ENCODE measurements at regions of chr11 and their contacts with region 1.

Region 1: DNA sequence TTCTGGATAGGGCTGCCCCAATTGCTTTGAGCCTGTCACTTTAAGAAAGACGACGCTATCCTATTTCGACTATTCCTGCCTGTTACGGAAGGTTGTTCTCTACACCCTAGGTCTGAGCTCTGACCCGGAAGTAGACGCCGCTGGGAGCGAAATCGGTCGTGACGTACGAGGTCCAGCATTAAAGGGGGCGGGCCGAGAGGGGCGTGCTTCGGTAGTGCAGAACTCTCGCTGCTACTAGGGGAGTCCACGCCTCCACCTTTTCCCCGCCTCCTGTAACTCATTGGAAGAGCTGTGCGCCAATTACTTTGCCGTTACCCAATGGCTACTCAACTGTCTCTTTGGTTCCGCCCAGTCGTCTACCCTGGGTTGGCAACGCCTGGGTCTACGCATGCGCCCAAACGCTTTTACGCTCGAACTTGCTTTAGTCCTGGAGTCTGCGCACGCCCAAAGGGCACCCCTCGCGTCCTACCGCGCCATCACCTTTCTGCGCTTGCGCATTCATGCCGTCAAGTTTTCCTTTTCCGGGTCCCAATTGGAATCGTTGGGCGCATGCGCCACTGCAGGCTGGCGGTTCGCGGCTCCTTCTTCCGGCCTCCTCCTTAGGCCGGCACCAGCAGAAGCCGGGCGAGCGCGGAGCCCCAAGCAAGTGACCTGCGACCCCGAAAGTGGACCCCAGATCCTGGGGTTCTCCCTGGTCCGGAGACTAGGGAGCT is at the start of gene PCNX3:
- DNase-seq: peak; percentile 100
- H3K4me3 ChIP-seq: peak within 1 kb of the TSS; percentile 93
- H3K27ac ChIP-seq: peak within 1 kb of the TSS; percentile 64
- H3K4me1 ChIP-seq: peaks cover 27% of the 10 kb centered on the region; the same call in 1 of the 2 replicates
- H3K27me3 ChIP-seq: no peaks in the 10 kb centered on the region
- CTCF ChIP-seq: no peak
- total RNA-seq, gene PCNX3: 76.9 and 85.9 TPM in 2 replicates

Region 2: DNA sequence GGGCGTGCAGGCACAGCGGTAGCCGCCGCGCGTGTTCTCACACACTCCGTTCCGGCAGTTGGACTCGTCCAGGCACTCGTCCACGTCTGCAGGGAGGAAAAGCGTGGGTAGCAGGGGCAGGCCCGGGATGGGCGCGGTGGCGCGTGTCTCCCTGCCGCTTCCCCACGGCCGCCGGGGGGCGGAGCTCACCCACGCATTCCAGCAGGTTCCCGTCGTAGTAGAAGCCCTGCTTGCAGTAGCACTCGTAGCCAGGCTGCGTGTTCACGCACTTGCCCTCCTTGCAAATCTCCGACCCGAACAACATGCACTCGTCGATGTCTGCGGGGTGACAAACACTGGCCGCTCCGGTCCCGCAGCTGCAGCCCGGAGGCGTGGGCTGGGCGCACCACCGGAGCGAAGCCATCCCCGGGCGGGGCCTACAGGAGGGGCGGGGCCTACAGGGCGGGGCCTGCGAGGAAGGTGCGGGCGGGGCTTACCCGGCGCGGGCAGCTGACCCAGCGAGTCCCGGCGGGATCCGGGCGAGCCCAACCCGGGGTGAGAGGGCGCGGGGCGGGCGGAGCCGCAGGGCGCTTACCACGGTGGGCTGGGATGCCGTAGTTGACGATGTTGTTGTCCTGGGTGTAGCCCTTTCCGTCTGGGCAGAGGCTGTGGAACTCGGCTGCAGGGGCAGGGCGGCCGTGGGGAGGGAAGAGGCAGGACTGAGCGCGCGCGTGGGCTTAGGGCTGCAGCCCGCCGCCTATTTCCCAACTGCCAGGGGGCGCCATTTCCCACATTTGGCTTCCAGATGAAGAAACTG is 74.9 kb before region 1 on chr11:
- CTCF ChIA-PET with region 1: no interaction called
- POLR2A ChIA-PET with region 1: no interaction called
- intact Hi-C with region 1: loop called (anchors 1 kb)
- DNase-seq: peak; percentile 66 to 90
- H3K4me3 ChIP-seq: peak overlapping the region; percentile 46; the same call in 1 of the 2 replicates
- H3K27ac ChIP-seq: no peak overlapping the region
- H3K4me1 ChIP-seq: peaks cover 17% of the 10 kb centered on the region
- H3K27me3 ChIP-seq: no peaks in the 10 kb centered on the region
- CTCF ChIP-seq: peak; percentile 95

Region 3: GRCh38 chr11:65637794-65638317 is 22.5 kb after region 1 on chr11 and contains the start of gene SIPA1:
- CTCF ChIA-PET with region 1: no interaction called
- POLR2A ChIA-PET with region 1: interaction called, 3 read pairs
- intact Hi-C with region 1: loop called (anchors 1 kb)
- DNase-seq: peak; percentile 86 to 94
- H3K4me3 ChIP-seq: peak within 1 kb of the TSS; percentile 57
- H3K27ac ChIP-seq: peak within 1 kb of the TSS; percentile 18
- H3K4me1 ChIP-seq: peaks cover 17% of the 10 kb centered on the region
- H3K27me3 ChIP-seq: no peaks in the 10 kb centered on the region
- CTCF ChIP-seq: peak; percentile 68
- total RNA-seq, gene SIPA1: 65.6 and 81.3 TPM in 2 replicates

Region 4: DNA sequence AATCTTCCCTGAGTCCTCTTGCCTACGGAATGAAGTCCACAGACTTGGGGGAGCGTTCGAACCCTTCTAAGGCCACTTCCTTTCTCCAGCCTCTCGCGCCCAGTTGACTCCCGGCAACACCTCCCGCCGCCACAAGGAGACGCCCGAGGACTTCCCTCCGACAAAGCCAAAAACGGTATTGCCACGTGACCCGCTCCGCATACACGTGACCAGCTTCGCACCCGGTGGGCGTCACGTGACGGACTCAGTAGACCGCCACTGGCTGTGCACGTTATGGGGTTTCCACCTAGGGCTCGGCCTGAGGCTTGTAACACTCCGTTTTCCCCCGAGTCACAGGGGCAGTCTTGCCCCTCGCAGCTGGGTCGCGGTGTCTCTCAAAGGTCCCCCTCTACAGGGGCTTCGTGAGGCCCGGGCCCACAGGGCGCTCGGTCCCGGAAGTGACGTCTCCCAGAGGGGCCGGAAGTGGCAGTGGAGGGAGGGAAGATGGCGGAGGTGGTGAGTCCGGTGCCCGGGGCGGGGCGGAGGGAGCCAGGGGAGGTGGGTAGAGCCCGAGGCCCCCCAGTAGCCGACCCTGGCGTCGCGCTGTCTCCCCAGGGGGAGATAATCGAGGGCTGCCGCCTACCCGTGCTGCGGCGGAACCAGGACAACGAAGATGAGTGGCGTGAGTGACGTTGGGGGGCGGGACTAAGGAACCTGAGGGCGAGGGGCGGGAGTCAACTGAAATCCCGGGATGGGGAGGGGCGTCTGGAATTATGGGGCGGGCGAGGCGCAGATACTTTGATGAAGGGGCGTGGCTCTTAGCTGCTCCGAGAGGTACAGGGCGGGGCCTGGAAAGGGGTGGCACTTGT is 96.6 kb after region 1 on chr11 and contains the start of gene KAT5:
- CTCF ChIA-PET with region 1: no interaction called
- POLR2A ChIA-PET with region 1: interaction called, 3 read pairs
- intact Hi-C with region 1: loop called (anchors 2 kb)
- DNase-seq: peak; percentile 96 to 99
- H3K4me3 ChIP-seq: peak within 1 kb of the TSS; percentile 86
- H3K27ac ChIP-seq: peak within 1 kb of the TSS; percentile 91
- H3K4me1 ChIP-seq: peaks cover 13% of the 10 kb centered on the region
- H3K27me3 ChIP-seq: no peaks in the 10 kb centered on the region
- CTCF ChIP-seq: peak; percentile 97
- total RNA-seq, gene KAT5: 49.6 and 57.1 TPM in 2 replicates

Region 5: DNA sequence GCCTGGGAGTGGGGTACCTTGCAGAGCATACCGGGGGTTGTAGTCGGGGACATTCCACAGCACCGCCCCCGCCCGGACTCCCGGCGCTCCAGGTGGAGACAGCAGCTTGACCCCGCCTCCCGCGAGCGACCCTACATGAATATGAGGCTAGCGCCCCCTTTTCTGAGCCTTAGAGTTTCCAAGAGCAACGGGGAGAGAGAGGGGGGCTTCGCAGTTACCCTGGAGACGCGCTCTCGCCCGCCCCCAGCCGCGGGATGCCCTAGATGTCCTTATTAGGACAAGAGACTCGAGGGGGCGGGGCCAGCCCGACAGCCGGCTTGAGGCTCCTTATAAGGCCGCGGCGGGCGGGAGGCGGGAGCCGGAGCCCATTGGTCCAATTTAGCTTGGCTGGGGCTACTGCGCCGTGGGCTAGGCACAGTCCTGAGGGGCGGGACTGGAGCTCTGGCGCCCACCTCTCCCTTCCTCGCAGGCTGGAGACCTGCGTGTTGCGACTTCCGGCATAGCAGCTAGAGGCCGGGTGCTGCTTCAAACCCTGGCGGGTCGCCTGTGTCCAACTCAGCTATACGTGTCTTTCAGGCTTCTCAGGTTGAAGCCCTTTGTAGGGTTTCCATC is 243.9 kb after region 1 on chr11:
- CTCF ChIA-PET with region 1: no interaction called
- POLR2A ChIA-PET with region 1: interaction called, 4 read pairs
- intact Hi-C with region 1: loop called (anchors 2 kb)
- DNase-seq: peak; percentile 96 to 99
- H3K4me3 ChIP-seq: peak overlapping the region; percentile 96
- H3K27ac ChIP-seq: peak overlapping the region; percentile 79
- H3K4me1 ChIP-seq: peaks cover 21% of the 10 kb centered on the region
- H3K27me3 ChIP-seq: no peaks in the 10 kb centered on the region
- CTCF ChIP-seq: peak; percentile 38; the same call in 1 of the 2 replicates